ENCODE measurements at regions of chr5 and their contacts with region 1.

Region 1: DNA sequence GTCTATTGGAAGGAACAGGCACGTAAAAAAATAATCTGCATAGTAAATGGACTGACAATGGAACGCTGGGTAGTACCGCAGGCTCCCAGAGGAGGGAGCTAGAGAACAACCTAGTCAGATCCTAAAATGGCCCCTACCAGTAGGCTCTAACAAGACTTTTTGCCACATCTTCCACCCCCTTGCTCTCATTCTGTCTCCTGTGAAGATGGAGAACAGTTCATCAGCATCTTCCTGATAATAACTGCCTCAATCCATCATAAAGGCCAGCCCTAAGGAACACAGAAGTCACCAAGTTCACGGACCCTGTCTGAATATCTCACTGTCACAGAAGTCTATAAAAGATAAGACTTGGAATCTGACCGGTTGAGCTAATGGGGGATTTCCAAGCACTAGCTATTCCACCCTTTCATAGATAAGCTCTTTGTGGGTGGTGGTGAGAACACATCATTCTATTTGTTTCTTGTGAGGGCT is 133.4 kb downstream of the SLC1A3 start:
- DNase-seq: peak; percentile 77 to 88
- H3K4me3 ChIP-seq: no peak overlapping the region
- H3K4me1 ChIP-seq: peaks cover 3% of the 10 kb centered on the region; the same call in 1 of the 2 replicates
- H3K27me3 ChIP-seq: peaks cover 5% of the 10 kb centered on the region; the same call in 1 of the 2 replicates

Region 2: DNA sequence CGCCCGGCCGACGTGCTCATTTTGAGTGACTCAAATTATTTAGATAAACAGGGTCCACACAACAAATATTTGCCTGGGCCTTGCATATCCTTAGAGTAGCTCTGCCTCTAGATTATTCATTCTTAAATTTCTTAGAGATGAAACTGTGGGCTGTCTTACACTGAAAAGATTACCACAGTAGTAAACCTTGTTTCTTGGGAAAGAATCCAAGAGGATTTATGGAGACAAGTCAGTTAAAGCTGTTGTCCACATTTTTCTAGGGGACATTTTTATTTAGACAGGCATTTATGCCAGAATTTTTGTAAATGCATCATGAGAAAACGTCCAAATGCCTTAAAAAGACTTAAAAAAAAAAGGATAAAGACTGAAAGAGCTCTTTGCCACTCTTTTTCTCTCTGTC is 405.5 kb before region 1 on chr5:
- in situ Hi-C with region 1: no loop called
- DNase-seq: no peak
- H3K4me3 ChIP-seq: no peak overlapping the region
- H3K4me1 ChIP-seq: no peaks in the 10 kb centered on the region
- H3K27me3 ChIP-seq: no peaks in the 10 kb centered on the region

Region 3: GRCh38 chr5:36836831-36837230 is 97.0 kb after region 1 on chr5:
- in situ Hi-C with region 1: no loop called
- DNase-seq: no peak
- H3K4me3 ChIP-seq: no peak overlapping the region
- H3K4me1 ChIP-seq: no peaks in the 10 kb centered on the region
- H3K27me3 ChIP-seq: peaks cover 19% of the 10 kb centered on the region

Region 4: DNA sequence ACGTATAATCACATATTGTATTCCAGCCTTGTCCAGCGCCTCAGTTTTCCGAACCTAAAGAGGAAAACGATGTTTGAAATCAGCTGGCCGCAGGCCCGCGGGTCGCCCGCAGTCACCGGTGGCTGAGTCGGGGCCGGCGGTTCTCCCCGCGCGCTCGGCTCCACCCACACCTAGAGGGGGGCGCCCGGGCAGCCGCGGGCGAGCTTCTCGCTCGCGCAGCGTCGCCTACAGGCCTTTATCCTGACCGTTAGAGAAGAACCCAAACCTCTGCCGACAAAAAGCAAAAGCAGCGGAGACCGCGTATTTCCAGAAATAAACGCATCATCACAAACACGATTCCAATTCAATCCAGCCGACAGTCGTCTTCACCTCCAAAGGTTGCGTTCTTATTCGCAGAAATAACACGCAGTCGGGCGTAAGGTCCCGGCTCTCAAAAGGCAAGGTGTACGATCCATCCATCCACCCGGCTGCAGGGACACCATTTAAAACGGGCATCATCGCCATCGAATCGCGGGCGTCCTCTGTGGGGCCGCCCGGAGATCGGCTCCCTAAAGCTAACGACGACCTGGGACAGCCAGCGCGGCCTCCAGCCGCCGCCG is 136.1 kb after region 1 on chr5:
- in situ Hi-C with region 1: loop called (anchors 5 kb)
- DNase-seq: peak; percentile 60 to 80
- H3K4me3 ChIP-seq: peak overlapping the region; percentile 79
- H3K4me1 ChIP-seq: peaks cover 33% of the 10 kb centered on the region
- H3K27me3 ChIP-seq: no peaks in the 10 kb centered on the region

Region 5: GRCh38 chr5:36928947-36929346 is 189.2 kb after region 1 on chr5:
- in situ Hi-C with region 1: no loop called
- DNase-seq: no peak
- H3K4me3 ChIP-seq: no peak overlapping the region
- H3K4me1 ChIP-seq: peaks cover 4% of the 10 kb centered on the region
- H3K27me3 ChIP-seq: no peaks in the 10 kb centered on the region

Region 6: GRCh38 chr5:37005946-37006540 is 266.3 kb after region 1 on chr5:
- in situ Hi-C with region 1: loop called (anchors 25 kb)
- DNase-seq: peak in 1 of 2 experiments; percentile 52
- H3K4me3 ChIP-seq: no peak overlapping the region
- H3K4me1 ChIP-seq: no peaks in the 10 kb centered on the region
- H3K27me3 ChIP-seq: no peaks in the 10 kb centered on the region

Measured in HAP-1 (cell line).